Gastrocnemius medialis (tissue), 4 donors: ENCODE measurements at regions of chr5 and their contacts with region 1.

Region 1: DNA sequence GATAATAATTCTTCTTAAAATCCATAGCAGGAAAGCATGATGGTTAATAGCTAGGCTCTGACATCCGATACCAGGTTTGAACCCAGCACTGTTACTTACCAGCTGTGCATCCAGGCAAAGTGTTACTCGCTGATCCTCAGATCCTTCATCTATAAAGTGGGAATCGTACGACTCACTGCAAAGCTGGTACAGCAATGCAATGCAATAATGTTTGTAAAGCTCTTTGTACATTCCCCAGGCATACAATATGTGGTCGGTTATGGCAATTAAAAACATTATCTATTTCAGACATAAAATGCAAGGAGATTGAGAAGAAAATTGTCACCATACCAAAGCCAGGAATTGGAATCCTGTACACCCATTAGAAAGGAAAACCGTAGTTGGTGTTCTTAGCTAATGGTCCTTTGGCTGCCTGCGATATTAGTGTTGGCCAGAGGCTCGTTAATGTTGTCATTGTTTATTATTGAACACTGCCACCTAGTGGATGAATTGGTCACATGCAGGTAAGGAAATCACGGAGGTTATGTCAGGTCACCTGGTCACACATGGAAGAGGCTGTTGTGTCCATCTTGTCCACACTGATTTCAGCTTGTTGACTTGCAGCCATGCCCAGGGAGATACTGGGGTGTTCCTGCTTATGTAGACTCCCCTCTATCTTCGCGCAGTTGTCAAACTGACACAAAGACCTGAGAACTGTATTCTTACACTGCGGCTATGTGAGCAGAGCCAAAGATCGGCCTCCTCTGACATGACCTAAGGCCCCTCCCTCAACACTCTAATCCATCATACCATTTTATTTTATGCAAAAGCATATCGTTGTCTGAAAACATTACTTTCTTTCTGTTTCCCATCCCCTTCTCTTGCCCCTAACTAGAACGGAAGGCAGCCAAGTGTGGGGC is 87.5 kb upstream of the PPP2R2B start:
- DNase-seq: peak; percentile 23 to 27
- ATAC-seq: peak; percentile 72 to 97
- H3K4me3 ChIP-seq: no peak overlapping the region
- H3K27ac ChIP-seq: no peak overlapping the region
- H3K4me1 ChIP-seq: peaks cover 0 to 4% of the 10 kb centered on the region in 2 donors
- H3K27me3 ChIP-seq: no peaks in the 10 kb centered on the region
- CTCF ChIP-seq: peak; percentile 62 to 86 (median 76)
- POLR2A ChIP-seq: no peak

Region 2: GRCh38 chr5:146541958-146542849 is 423.8 kb before region 1 on chr5:
- in situ Hi-C with region 1: loop called (anchors 5 to 10 kb)
- intact Hi-C with region 1: loop called (anchors 1 kb)
- DNase-seq: peak; percentile 28 to 47
- ATAC-seq: peak; percentile 62 to 87
- H3K4me3 ChIP-seq: no peak overlapping the region
- H3K27ac ChIP-seq: no peak overlapping the region
- H3K4me1 ChIP-seq: no peaks in the 10 kb centered on the region
- H3K27me3 ChIP-seq: no peaks in the 10 kb centered on the region
- CTCF ChIP-seq: peak; percentile 48 to 76 (median 63)
- POLR2A ChIP-seq: no peak

Region 3: DNA sequence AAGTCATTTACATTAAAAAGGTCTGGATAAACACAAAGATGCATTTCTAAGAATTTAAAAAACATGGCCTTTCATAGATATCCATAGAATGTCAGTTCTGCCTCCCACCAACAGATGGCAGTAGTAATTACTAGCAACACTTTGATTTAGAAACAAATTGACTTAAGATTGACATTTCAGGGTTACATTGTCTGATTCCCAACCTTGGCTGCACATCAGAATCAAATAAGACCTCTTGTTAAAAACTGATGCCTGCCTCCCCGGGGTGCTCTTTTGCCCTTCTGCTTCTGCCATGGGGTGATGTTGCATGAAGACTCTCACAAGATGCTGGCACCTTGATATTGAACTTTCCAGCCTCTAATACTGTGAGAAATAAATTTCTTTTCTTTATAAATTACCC is 303.8 kb before region 1 on chr5:
- in situ Hi-C with region 1: loop called in 1 of 4 experiments (anchors 25 kb)
- intact Hi-C with region 1: no loop called
- DNase-seq: no peak
- ATAC-seq: no peak
- H3K4me3 ChIP-seq: no peak overlapping the region
- H3K27ac ChIP-seq: no peak overlapping the region
- H3K4me1 ChIP-seq: no peaks in the 10 kb centered on the region
- H3K27me3 ChIP-seq: no peaks in the 10 kb centered on the region
- CTCF ChIP-seq: peak in 2 of 5 experiments; percentile 5 to 42
- POLR2A ChIP-seq: no peak

Region 4: GRCh38 chr5:147628058-147628895 is 662.3 kb after region 1 on chr5:
- in situ Hi-C with region 1: no loop called
- intact Hi-C with region 1: no loop called
- DNase-seq: peak in 1 of 2 donors; percentile 13
- ATAC-seq: peak; percentile 65 to 77
- H3K4me3 ChIP-seq: no peak overlapping the region
- H3K27ac ChIP-seq: no peak overlapping the region
- H3K4me1 ChIP-seq: no peaks in the 10 kb centered on the region
- H3K27me3 ChIP-seq: no peaks in the 10 kb centered on the region
- CTCF ChIP-seq: peak in 4 of 5 experiments; percentile 26 to 63 (median 51)
- POLR2A ChIP-seq: no peak